ENCODE measurements at regions of chr22 and their contacts with region 1.

Region 1: DNA sequence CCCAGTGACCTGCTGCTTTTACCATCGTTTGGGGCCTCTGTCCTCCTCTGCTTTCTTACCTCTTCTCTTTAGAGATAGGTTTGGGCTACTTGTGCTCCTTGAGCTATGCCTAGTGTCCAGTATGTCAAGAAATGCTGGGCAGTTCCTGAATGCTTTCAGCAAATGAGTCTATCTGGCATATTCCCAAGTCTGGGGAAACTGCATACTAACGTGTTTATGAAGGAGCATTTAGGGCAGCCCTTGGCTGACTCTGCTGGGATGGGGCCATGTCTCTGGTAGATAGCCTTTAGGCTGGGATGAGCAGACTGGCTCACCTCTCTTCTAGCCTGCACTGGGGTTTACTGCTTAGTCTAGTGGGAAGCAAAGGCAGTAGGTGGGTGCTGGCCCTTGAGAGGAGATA is 43.7 kb upstream of the SUSD2 start:
- DNase-seq: no peak
- ATAC-seq: peak in 1 of 8 donors; percentile 8
- H3K4me3 ChIP-seq: no peak overlapping the region
- H3K27ac ChIP-seq: no peak overlapping the region
- H3K4me1 ChIP-seq: peaks cover 2 to 56% (median 25%) of the 10 kb centered on the region in 9 donors
- H3K27me3 ChIP-seq: no peaks in the 10 kb centered on the region
- CTCF ChIP-seq: no peak

Region 2: GRCh38 chr22:24117942-24118341 is 19.7 kb before region 1 on chr22:
- intact Hi-C with region 1: no loop called
- DNase-seq: no peak
- ATAC-seq: no peak
- H3K4me3 ChIP-seq: no peak overlapping the region
- H3K27ac ChIP-seq: no peak overlapping the region
- H3K4me1 ChIP-seq: peaks cover 13 to 31% (median 27%) of the 10 kb centered on the region in 9 donors
- H3K27me3 ChIP-seq: no peaks in the 10 kb centered on the region
- CTCF ChIP-seq: no peak

Region 3: GRCh38 chr22:24170248-24170630 is 32.6 kb after region 1 on chr22:
- intact Hi-C with region 1: loop called in 1 of 10 experiments (anchors 5 kb)
- DNase-seq: no peak
- ATAC-seq: no peak
- H3K4me3 ChIP-seq: no peak overlapping the region
- H3K27ac ChIP-seq: no peak overlapping the region
- H3K4me1 ChIP-seq: peaks cover 6 to 29% (median 13%) of the 10 kb centered on the region in 9 donors
- H3K27me3 ChIP-seq: no peaks in the 10 kb centered on the region
- CTCF ChIP-seq: no peak

Region 4: GRCh38 chr22:24305260-24305692 is 167.7 kb after region 1 on chr22:
- intact Hi-C with region 1: no loop called
- DNase-seq: no peak
- ATAC-seq: no peak
- H3K4me3 ChIP-seq: no peak overlapping the region
- H3K27ac ChIP-seq: peak overlapping the region in 6 of 10 donors; percentile 12 to 81 (median 34)
- H3K4me1 ChIP-seq: peaks cover 9 to 70% (median 55%) of the 10 kb centered on the region in 9 donors
- H3K27me3 ChIP-seq: no peaks in the 10 kb centered on the region
- CTCF ChIP-seq: no peak

Measured in heart right ventricle (tissue), 16 donors.